ENCODE measurements at regions of chr10 and their contacts with region 1.

Region 1: DNA sequence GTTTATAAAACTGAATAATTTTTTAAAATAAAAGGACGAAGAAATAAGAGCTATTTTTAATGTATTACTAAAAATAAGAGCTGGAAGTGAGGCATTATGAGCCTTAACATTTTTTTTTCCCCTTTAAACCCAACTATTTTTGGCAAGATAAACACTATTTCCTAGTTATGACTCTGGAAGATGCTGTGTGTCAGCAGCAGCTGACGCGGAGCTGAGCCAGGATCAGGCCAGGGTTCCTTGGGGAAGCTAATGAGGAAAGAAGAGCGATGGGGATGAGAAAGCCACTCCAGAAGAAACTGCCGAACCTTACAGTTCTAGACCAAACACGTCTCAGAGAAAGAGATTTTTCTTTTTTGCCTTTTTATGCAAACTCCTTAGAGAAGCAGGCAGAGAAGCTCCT is 85.9 kb downstream of the USP6NL start:
- DNase-seq: no peak
- H3K4me3 Mint-ChIP-seq: no peak overlapping the region
- H3K27ac Mint-ChIP-seq: no peak overlapping the region
- H3K4me1 Mint-ChIP-seq: peaks cover 10% of the 10 kb centered on the region
- H3K27me3 Mint-ChIP-seq: peaks cover 21% of the 10 kb centered on the region

Region 2: DNA sequence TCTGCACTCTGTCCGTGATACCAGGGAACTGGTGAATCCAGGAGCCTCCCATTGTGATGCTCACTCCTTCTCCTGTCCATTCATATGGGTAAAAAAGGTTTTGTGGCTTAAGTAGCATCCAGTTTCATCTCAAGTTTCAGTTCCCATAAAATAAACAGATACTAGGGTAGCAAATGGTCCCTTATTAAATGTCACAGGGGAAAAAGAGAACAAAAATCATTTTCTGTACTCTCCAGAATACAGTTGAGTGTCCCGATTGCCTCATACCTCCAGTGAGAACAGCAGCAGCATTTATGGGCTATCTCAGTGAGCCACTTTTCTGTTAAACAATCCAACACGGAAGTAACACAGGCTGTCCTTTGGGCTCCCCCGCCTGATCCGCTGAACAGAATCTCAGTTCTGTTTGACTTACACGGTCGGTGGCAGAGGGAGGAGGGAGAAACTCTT is 328.2 kb before region 1 on chr10:
- intact Hi-C with region 1: no loop called
- DNase-seq: no peak
- H3K4me3 Mint-ChIP-seq: no peak overlapping the region
- H3K27ac Mint-ChIP-seq: peak overlapping the region; percentile 71
- H3K4me1 Mint-ChIP-seq: peaks cover 84% of the 10 kb centered on the region
- H3K27me3 Mint-ChIP-seq: no peaks in the 10 kb centered on the region

Region 3: GRCh38 chr10:11462071-11462470 is 63.4 kb before region 1 on chr10:
- intact Hi-C with region 1: no loop called
- DNase-seq: no peak
- H3K4me3 Mint-ChIP-seq: no peak overlapping the region
- H3K27ac Mint-ChIP-seq: no peak overlapping the region
- H3K4me1 Mint-ChIP-seq: no peaks in the 10 kb centered on the region
- H3K27me3 Mint-ChIP-seq: peaks cover 2% of the 10 kb centered on the region

Region 4: DNA sequence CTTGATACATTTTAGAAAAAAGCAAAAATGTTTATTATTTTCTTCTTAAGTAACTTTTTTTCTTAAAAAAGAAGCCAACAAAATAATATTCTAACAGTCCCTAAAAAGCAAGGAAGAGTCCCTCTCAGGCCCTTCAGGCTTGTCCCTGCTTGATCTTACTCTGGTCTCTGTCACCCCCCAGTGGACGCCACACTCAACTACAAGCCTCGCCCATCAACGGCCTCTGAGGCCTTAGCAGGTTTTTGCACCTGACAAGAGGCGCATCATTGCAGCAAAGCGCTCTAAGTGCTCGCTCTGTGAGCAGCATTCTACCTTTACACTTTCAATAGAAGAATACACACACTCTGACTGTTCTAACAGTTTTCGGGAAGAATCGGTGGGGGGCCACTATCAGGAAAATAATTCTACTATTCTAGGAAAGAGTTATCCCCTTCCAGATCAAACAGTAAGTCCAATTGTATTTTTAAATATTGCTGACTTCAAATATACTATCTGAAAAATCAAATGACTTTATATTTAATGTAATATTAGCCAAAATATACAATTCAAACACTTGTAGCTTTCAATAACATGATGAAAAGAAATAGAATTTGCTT is 53.2 kb before region 1 on chr10:
- intact Hi-C with region 1: no loop called
- DNase-seq: peak; percentile 54
- H3K4me3 Mint-ChIP-seq: no peak overlapping the region
- H3K27ac Mint-ChIP-seq: no peak overlapping the region
- H3K4me1 Mint-ChIP-seq: no peaks in the 10 kb centered on the region
- H3K27me3 Mint-ChIP-seq: peaks cover 3% of the 10 kb centered on the region

Region 5: GRCh38 chr10:11573497-11573896 is 48.0 kb after region 1 on chr10:
- intact Hi-C with region 1: loop called (anchors 10 kb)
- DNase-seq: no peak
- H3K4me3 Mint-ChIP-seq: no peak overlapping the region
- H3K27ac Mint-ChIP-seq: no peak overlapping the region
- H3K4me1 Mint-ChIP-seq: no peaks in the 10 kb centered on the region
- H3K27me3 Mint-ChIP-seq: peaks cover 35% of the 10 kb centered on the region

Region 6: DNA sequence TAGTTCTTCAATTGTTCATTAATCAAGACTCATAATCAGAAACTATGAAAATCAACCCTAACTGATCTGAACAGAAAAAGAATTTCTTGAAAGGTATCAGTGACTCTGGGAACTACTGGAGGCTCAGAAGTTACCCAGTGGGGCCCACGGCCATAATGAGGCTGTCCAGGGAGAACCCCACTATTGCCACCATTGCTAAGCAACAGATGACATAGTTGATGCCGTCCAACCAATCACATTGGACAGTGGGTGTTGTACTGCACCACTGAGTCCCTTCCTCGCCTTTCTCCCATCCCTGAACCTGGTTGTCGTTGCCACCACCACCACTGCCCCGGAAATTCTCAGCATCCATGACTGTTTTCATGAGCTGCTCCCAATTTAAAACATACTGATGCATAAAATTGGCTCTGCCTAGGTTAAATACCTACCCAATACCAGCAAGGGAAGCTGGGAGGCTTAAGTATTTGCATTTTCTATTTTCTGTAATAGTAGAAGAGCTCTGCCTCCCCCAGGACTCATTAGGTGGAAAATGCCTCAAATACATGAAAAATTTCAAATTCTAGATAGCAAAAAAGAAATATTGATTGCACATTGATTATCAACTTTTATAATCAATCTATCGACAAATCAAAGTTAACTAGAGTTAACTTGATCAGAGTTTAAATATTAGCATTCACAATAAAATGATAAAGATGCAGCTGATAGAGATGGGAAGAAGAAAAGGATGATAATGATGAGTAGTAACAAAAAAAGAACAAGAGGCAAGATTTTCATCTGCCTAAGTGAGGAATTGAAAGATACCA is 112.8 kb after region 1 on chr10:
- intact Hi-C with region 1: no loop called
- DNase-seq: no peak
- H3K4me3 Mint-ChIP-seq: no peak overlapping the region
- H3K27ac Mint-ChIP-seq: no peak overlapping the region
- H3K4me1 Mint-ChIP-seq: no peaks in the 10 kb centered on the region
- H3K27me3 Mint-ChIP-seq: peaks cover 36% of the 10 kb centered on the region